Pancreas (tissue), 10 donors: ENCODE measurements at regions of chr16 and their contacts with region 1.

Region 1: DNA sequence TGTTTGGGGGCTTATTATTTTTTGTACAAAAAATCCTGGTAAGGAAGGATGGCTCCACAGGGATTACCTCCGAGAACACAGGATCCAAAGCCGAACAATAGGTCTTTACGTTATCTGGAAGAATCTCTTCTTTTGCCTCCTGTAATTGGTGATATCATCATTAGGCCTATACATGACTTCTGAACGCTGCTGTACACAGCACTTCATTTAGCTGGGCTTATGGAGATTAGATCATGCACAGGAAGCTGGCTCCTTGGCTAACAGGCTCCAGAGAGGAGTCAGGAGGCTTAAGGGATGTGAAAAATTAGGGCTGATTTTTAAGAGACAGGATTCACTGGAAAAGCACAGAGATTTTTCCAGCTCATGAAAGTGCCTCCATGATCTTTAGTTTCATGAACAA is 54.7 kb downstream of the TANGO6 start:
- DNase-seq: no peak
- ATAC-seq: no peak
- H3K4me3 ChIP-seq: no peak overlapping the region
- H3K27ac ChIP-seq: no peak overlapping the region
- H3K4me1 ChIP-seq: no peaks in the 10 kb centered on the region
- H3K27me3 ChIP-seq: no peaks in the 10 kb centered on the region
- CTCF ChIP-seq: no peak

Region 2: GRCh38 chr16:69123910-69124309 is 225.9 kb after region 1 on chr16:
- intact Hi-C with region 1: loop called in 1 of 3 experiments (anchors 5 kb)
- DNase-seq: peak in 3 of 6 donors; percentile 51 to 62 (median 58)
- ATAC-seq: peak in 3 of 4 donors; percentile 64 to 73 (median 69)
- H3K4me3 ChIP-seq: no peak overlapping the region
- H3K27ac ChIP-seq: no peak overlapping the region
- H3K4me1 ChIP-seq: peaks cover 7 to 10% (median 8%) of the 10 kb centered on the region in 3 donors
- H3K27me3 ChIP-seq: no peaks in the 10 kb centered on the region
- CTCF ChIP-seq: peak; percentile 28 to 55 (median 42)